ENCODE measurements at regions of chr4 and their contacts with region 1.

Region 1: GRCh38 chr4:112704991-112705845 is 68.3 kb downstream of the LARP7 start:
- DNase-seq: peak; percentile 19 to 58
- H3K4me3 ChIP-seq: peak overlapping the region; percentile 53 to 73 (median 64)
- H3K27ac ChIP-seq: peak overlapping the region; percentile 84
- H3K4me1 ChIP-seq: peaks cover 0 to 21% (median 3%) of the 10 kb centered on the region in 4 experiments; a peak in 6 of 7 replicates
- H3K27me3 ChIP-seq: no peaks in the 10 kb centered on the region
- CTCF ChIP-seq: no peak
- EP300 ChIP-seq: no peak
- POLR2A ChIP-seq: peak; percentile 60 to 76
- RAD21 ChIP-seq: no peak

Region 2: DNA sequence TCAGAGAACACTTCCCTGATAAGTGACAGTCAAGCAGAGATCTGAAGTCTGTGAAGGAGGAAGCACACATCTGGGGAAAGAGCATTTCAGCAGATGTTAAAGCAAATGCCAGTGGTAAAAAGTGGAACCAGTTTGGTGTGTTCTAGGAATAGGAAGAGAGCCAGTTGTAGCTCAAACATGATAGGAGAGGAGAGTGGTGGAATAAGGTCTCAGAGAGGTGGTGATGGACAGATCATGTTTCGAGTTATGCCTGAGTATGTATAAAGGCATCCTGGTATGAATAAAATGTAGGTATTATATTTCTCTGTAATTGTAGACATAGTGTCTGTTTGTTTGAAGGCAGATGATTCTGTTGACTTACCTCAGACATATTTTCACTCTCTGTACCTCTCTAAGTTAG is 20.8 kb after region 1 on chr4:
- CTCF ChIA-PET with region 1: no interaction called
- POLR2A ChIA-PET with region 1: interaction called, 26 read pairs
- DNase-seq: peak in 1 of 2 experiments; percentile 28
- H3K4me3 ChIP-seq: no peak overlapping the region
- H3K27ac ChIP-seq: peak overlapping the region; percentile 18; the same call in 1 of the 2 replicates
- H3K4me1 ChIP-seq: peaks cover 0 to 2% (median 0%) of the 10 kb centered on the region in 4 experiments; a peak in 1 of 7 replicates
- H3K27me3 ChIP-seq: no peaks in the 10 kb centered on the region
- CTCF ChIP-seq: no peak
- EP300 ChIP-seq: no peak
- POLR2A ChIP-seq: no peak
- RAD21 ChIP-seq: no peak

Region 3: DNA sequence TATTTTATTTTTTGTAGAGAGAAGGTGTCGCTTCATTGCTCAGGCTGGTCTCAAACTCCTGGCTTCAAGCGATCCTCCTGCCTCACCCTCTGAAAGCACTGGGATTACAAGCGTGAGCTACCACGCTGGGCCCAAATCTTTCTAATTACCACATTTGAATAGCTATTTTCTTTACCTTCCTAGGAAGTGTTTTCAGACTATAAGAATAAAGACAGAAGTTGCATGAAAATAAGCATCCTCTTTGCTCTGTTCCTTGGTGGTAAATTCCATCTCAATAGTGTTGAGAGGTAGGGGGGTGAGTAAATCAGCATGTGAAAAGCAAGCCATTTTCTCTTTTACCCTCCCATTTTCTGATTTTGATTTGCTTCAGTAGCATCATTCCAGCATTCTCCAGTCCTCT is 54.1 kb after region 1 on chr4:
- CTCF ChIA-PET with region 1: interaction called, 18 read pairs
- POLR2A ChIA-PET with region 1: interaction called, 39 read pairs
- DNase-seq: peak in 1 of 2 experiments; percentile 65
- H3K4me3 ChIP-seq: peak overlapping the region in 1 of 4 experiments; percentile 35; a peak in 1 of 8 replicates
- H3K27ac ChIP-seq: peak overlapping the region; percentile 78; the same call in 1 of the 2 replicates
- H3K4me1 ChIP-seq: peaks cover 0 to 7% (median 5%) of the 10 kb centered on the region in 4 experiments; a peak in 4 of 7 replicates
- H3K27me3 ChIP-seq: no peaks in the 10 kb centered on the region
- CTCF ChIP-seq: no peak
- EP300 ChIP-seq: peak in 1 of 2 experiments; percentile 79; a peak in 1 of 3 replicates
- POLR2A ChIP-seq: no peak; a peak in 1 of 3 replicates
- RAD21 ChIP-seq: no peak; a peak in 1 of 4 replicates

Region 4: GRCh38 chr4:112840061-112840460 is 134.8 kb after region 1 on chr4:
- CTCF ChIA-PET with region 1: no interaction called
- POLR2A ChIA-PET with region 1: no interaction called
- DNase-seq: no peak
- H3K4me3 ChIP-seq: no peak overlapping the region
- H3K27ac ChIP-seq: no peak overlapping the region
- H3K4me1 ChIP-seq: peaks cover 0 to 3% (median 0%) of the 10 kb centered on the region in 4 experiments; a peak in 2 of 7 replicates
- H3K27me3 ChIP-seq: no peaks in the 10 kb centered on the region
- CTCF ChIP-seq: no peak
- EP300 ChIP-seq: no peak
- POLR2A ChIP-seq: no peak
- RAD21 ChIP-seq: no peak